ENCODE measurements at regions of chr10 and their contacts with region 1.

Region 1: GRCh38 chr10:23525406-23525805 is 86.5 kb downstream of the OTUD1 start:
- DNase-seq: peak in 4 of 5 donors; percentile 8 to 23 (median 14)
- H3K4me3 ChIP-seq: no peak overlapping the region
- H3K4me3 Mint-ChIP-seq: no peak overlapping the region
- H3K27ac ChIP-seq: no peak overlapping the region
- H3K27ac Mint-ChIP-seq: peak overlapping the region in 1 of 7 donors; percentile 5
- H3K4me1 ChIP-seq: no peaks in the 10 kb centered on the region
- H3K4me1 Mint-ChIP-seq: no peaks in the 10 kb centered on the region
- H3K27me3 ChIP-seq: no peaks in the 10 kb centered on the region
- H3K27me3 Mint-ChIP-seq: peaks cover 0 to 4% of the 10 kb centered on the region in 2 donors

Region 2: GRCh38 chr10:23120001-23120934 is 405.1 kb before region 1 on chr10:
- CTCF ChIA-PET with region 1: no interaction called
- POLR2A ChIA-PET with region 1: no interaction called
- intact Hi-C with region 1: no loop called
- DNase-seq: no peak
- H3K4me3 ChIP-seq: no peak overlapping the region
- H3K4me3 Mint-ChIP-seq: no peak overlapping the region
- H3K27ac ChIP-seq: no peak overlapping the region
- H3K27ac Mint-ChIP-seq: no peak overlapping the region
- H3K4me1 ChIP-seq: no peaks in the 10 kb centered on the region
- H3K4me1 Mint-ChIP-seq: no peaks in the 10 kb centered on the region
- H3K27me3 ChIP-seq: no peaks in the 10 kb centered on the region
- H3K27me3 Mint-ChIP-seq: no peaks in the 10 kb centered on the region

Region 3: DNA sequence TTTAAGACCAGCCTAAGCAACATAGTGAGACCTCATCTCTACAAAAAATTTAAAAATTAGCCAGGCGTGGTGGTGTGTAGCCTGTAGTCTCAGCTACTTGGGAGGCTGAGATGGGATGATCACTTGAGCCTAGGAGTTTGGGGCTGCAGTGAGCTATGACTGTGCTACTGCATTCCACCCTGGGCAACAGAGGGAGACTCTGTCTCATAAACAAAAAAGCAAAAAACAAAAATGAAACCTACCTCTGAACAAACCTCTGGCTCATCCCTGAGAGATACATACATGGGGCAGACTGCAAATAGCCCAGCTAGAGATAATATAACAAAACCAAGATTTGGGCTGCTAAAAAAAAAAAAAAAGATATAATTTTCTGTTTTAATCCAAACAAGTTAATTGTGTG is 200.3 kb before region 1 on chr10:
- CTCF ChIA-PET with region 1: interaction called, 261 read pairs
- POLR2A ChIA-PET with region 1: no interaction called
- intact Hi-C with region 1: no loop called
- DNase-seq: no peak
- H3K4me3 ChIP-seq: no peak overlapping the region
- H3K4me3 Mint-ChIP-seq: no peak overlapping the region
- H3K27ac ChIP-seq: no peak overlapping the region
- H3K27ac Mint-ChIP-seq: peak overlapping the region in 1 of 7 donors; percentile 41
- H3K4me1 ChIP-seq: no peaks in the 10 kb centered on the region
- H3K4me1 Mint-ChIP-seq: peaks cover 0 to 2% (median 0%) of the 10 kb centered on the region in 4 donors
- H3K27me3 ChIP-seq: no peaks in the 10 kb centered on the region
- H3K27me3 Mint-ChIP-seq: peaks cover 9 to 11% of the 10 kb centered on the region in 2 donors

Region 4: DNA sequence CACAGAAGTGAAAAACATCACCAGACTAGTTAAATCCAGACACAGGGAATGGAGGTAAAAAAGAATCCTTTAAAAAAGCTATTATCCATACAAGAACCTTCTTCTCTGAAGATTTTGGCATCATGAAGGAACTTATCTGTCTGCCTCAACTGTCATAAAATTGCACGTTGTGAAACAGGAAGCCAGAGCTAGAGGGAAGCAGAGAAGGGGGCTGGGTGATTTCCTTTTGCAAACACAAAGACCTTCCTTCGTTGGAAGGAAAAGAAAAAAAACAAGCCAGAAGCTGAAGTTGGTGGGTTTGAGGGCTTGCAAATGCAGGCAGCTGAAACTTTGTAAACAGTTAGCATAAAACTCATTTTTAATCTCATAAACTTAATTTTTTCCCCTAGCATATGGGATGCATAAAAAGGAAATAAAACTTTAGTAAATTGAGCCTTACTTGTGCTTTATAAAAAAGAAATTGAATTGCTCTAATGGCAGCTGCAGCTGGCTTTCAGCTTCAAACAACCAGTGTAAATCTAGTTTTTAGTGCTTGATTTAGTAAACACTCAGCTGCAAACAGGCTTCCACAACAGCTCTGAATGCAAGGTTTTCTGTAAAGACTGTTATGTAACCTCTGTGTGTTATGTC is 15.1 kb after region 1 on chr10:
- CTCF ChIA-PET with region 1: interaction called, 52 read pairs
- POLR2A ChIA-PET with region 1: no interaction called
- intact Hi-C with region 1: no loop called
- DNase-seq: peak in 1 of 5 donors; percentile 7
- H3K4me3 ChIP-seq: no peak overlapping the region
- H3K4me3 Mint-ChIP-seq: peak overlapping the region in 7 of 8 donors; percentile 8 to 74 (median 38)
- H3K27ac ChIP-seq: no peak overlapping the region
- H3K27ac Mint-ChIP-seq: peak overlapping the region in 6 of 7 donors; percentile 5 to 76 (median 48)
- H3K4me1 ChIP-seq: peaks cover 23% of the 10 kb centered on the region
- H3K4me1 Mint-ChIP-seq: peaks cover 16 to 30% (median 23%) of the 10 kb centered on the region in 4 donors
- H3K27me3 ChIP-seq: no peaks in the 10 kb centered on the region
- H3K27me3 Mint-ChIP-seq: peaks cover 4 to 10% of the 10 kb centered on the region in 2 donors

Region 5: DNA sequence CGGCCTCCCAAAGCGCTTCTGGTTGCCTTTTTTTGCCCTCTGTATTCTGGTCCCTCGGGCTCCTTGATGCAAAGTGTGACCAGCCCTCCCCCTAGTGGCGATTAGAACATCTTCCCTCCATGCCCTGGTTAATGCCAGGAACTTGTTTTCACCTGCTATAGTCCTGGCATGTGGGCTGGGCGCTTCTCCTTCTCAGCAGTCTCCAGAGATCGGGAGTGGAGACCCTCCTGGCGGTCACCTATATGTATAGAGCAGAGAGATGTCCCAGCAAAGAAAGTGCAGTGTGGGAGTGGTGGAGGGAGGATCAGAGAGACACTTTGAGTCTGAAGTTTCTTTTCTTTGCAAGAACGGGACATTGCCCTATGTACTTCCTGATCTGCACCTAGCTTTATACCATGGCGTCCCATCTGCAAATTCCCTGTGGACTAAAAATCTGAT is 177.6 kb after region 1 on chr10:
- CTCF ChIA-PET with region 1: interaction called, 4 read pairs
- POLR2A ChIA-PET with region 1: no interaction called
- intact Hi-C with region 1: loop called (anchors 5 kb)
- DNase-seq: peak; percentile 42 to 49 (median 44)
- H3K4me3 ChIP-seq: no peak overlapping the region
- H3K4me3 Mint-ChIP-seq: peak overlapping the region in 2 of 8 donors; percentile 27 to 32
- H3K27ac ChIP-seq: no peak overlapping the region
- H3K27ac Mint-ChIP-seq: no peak overlapping the region
- H3K4me1 ChIP-seq: no peaks in the 10 kb centered on the region
- H3K4me1 Mint-ChIP-seq: peaks cover 0 to 2% (median 0%) of the 10 kb centered on the region in 4 donors
- H3K27me3 ChIP-seq: no peaks in the 10 kb centered on the region
- H3K27me3 Mint-ChIP-seq: peaks cover 15 to 17% of the 10 kb centered on the region in 2 donors